ENCODE measurements at regions of chr21 and their contacts with region 1.

Region 1: DNA sequence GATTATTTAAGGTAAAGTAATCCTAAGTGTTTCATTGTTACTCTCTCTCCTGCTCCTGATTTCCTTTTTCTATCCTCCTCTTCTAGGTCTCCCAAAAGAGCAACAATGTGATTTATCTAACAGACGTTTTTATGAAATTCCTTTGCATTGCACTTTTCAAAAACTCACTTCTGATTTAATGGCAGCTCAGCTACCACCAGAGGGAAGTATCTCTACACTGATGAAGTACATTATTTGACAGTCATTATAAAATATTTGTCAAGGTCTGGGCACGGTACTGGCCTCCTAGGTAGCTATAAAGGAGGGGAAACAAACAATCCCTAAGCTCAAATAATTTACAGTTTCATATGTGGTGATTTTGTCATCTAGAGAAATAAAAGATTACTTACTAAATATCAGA is 15.6 kb downstream of the TMPRSS15 start:
- DNase-seq: peak; percentile 56
- H3K4me3 ChIP-seq: no peak overlapping the region
- H3K27ac ChIP-seq: no peak overlapping the region
- H3K4me1 ChIP-seq: peaks cover 20% of the 10 kb centered on the region
- CTCF ChIP-seq: peak; percentile 78

Region 2: GRCh38 chr21:18499761-18500376 is 111.9 kb after region 1 on chr21:
- CTCF ChIA-PET with region 1: interaction called, 4 read pairs
- POLR2A ChIA-PET with region 1: no interaction called
- intact Hi-C with region 1: loop called (anchors 2 kb)
- DNase-seq: peak; percentile 67
- H3K4me3 ChIP-seq: no peak overlapping the region
- H3K27ac ChIP-seq: no peak overlapping the region
- H3K4me1 ChIP-seq: no peaks in the 10 kb centered on the region
- CTCF ChIP-seq: peak; percentile 98